ENCODE measurements at regions of chr6 and their contacts with region 1.

Region 1: GRCh38 chr6:127464881-127465459 is 5.8 kb upstream of the KIAA0408 start:
- DNase-seq: peak; percentile 65 to 68
- H3K4me3 ChIP-seq: no peak overlapping the region
- H3K4me3 Mint-ChIP-seq: no peak overlapping the region
- H3K27ac Mint-ChIP-seq: no peak overlapping the region
- H3K4me1 ChIP-seq: no peaks in the 10 kb centered on the region
- H3K4me1 Mint-ChIP-seq: no peaks in the 10 kb centered on the region
- H3K27me3 ChIP-seq: no peaks in the 10 kb centered on the region
- H3K27me3 Mint-ChIP-seq: no peaks in the 10 kb centered on the region
- CTCF ChIP-seq: peak; percentile 74 to 93

Region 2: GRCh38 chr6:127302728-127303660 is 162.0 kb before region 1 on chr6:
- CTCF ChIA-PET with region 1: no interaction called
- POLR2A ChIA-PET with region 1: no interaction called
- intact Hi-C with region 1: loop called (anchors 2 kb)
- DNase-seq: peak in 1 of 2 experiments; percentile 34
- H3K4me3 ChIP-seq: no peak overlapping the region
- H3K4me3 Mint-ChIP-seq: no peak overlapping the region
- H3K27ac Mint-ChIP-seq: no peak overlapping the region
- H3K4me1 ChIP-seq: no peaks in the 10 kb centered on the region
- H3K4me1 Mint-ChIP-seq: peaks cover 6% of the 10 kb centered on the region
- H3K27me3 ChIP-seq: no peaks in the 10 kb centered on the region
- H3K27me3 Mint-ChIP-seq: no peaks in the 10 kb centered on the region
- CTCF ChIP-seq: peak; percentile 56 to 76

Region 3: DNA sequence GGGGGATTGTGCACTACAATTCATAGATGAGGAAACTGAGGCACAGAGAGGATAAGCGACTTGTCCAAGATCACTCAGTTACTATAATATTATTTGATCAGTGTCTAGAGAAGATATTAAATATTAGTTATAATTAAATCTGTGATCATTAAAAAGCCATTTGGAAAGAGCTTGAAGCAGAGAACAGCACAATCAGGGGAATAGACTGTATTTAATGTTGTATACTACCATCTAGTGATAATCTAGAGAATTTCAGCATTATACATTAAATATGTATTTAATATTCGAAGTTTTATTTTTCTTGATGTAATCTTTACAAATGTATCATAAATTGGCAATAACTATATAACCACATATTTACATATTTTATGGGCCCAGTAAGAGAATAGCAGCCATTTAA is 74.3 kb after region 1 on chr6:
- CTCF ChIA-PET with region 1: interaction called, 3 read pairs
- POLR2A ChIA-PET with region 1: no interaction called
- intact Hi-C with region 1: loop called (anchors 1 kb)
- DNase-seq: no peak
- H3K4me3 ChIP-seq: no peak overlapping the region
- H3K4me3 Mint-ChIP-seq: no peak overlapping the region
- H3K27ac Mint-ChIP-seq: no peak overlapping the region
- H3K4me1 ChIP-seq: no peaks in the 10 kb centered on the region
- H3K4me1 Mint-ChIP-seq: no peaks in the 10 kb centered on the region
- H3K27me3 ChIP-seq: no peaks in the 10 kb centered on the region
- H3K27me3 Mint-ChIP-seq: peaks cover 2% of the 10 kb centered on the region
- CTCF ChIP-seq: no peak

Region 4: DNA sequence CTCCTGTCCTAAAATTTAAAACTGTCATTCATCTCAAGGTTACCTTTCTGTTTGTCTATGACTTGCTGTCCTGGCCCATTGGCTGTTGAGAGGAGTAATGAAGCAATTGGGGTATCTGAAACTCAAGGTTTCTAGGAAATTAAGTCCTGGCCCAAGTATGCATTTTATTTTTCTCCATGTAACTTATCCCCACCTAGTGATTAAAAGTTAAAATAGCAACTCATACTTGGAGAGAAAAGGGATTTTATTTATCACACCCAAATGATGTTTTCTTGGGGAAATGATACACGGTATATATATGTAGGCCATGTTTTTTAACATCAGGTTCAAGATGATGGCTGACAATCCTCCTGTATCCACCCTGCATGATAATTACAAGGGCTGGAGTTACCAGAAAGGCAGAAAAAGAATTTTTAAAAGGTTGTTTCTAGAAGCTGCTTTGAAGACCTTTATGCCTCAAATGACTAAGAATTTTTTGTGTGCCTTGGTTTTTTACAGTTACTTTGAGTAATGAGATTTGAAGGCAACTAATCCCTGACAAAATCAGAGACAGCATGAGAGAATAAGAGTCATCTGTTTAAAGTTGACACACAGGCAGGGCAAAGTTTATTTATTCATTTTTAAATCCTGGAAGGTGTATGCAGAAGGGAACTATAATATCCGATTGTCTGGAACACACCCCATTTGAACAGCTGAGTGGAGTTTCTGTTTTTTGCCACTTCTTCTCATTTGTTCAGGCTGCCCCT is 83.1 kb after region 1 on chr6:
- CTCF ChIA-PET with region 1: interaction called, 3 read pairs
- POLR2A ChIA-PET with region 1: no interaction called
- intact Hi-C with region 1: loop called (anchors 1 kb)
- DNase-seq: no peak
- H3K4me3 ChIP-seq: no peak overlapping the region
- H3K4me3 Mint-ChIP-seq: no peak overlapping the region
- H3K27ac Mint-ChIP-seq: no peak overlapping the region
- H3K4me1 ChIP-seq: no peaks in the 10 kb centered on the region
- H3K4me1 Mint-ChIP-seq: no peaks in the 10 kb centered on the region
- H3K27me3 ChIP-seq: no peaks in the 10 kb centered on the region
- H3K27me3 Mint-ChIP-seq: peaks cover 3% of the 10 kb centered on the region
- CTCF ChIP-seq: peak in 1 of 2 experiments; percentile 12

Region 5: DNA sequence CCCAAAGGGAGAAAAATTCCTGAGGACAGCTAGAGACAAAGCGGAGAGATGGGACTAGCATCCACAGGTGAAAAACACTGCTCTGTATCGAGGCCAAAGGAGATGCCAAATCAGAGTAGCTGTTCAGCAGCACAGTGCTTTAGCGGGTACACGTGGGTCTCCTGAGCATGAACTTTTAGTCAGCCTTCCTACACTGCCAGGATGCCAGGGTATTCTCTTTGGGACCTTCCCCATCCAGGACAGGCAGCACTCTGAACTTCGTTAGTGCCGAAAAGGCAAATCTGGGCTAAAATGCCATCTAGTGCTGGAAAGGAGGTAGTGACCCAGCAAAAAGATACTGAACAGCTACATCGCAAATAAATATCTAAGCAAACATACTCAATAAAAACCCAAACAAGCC is 176.9 kb after region 1 on chr6:
- CTCF ChIA-PET with region 1: no interaction called
- POLR2A ChIA-PET with region 1: no interaction called
- intact Hi-C with region 1: loop called (anchors 1 kb)
- DNase-seq: peak; percentile 30 to 36
- H3K4me3 ChIP-seq: no peak overlapping the region
- H3K4me3 Mint-ChIP-seq: no peak overlapping the region
- H3K27ac Mint-ChIP-seq: no peak overlapping the region
- H3K4me1 ChIP-seq: no peaks in the 10 kb centered on the region
- H3K4me1 Mint-ChIP-seq: no peaks in the 10 kb centered on the region
- H3K27me3 ChIP-seq: no peaks in the 10 kb centered on the region
- H3K27me3 Mint-ChIP-seq: no peaks in the 10 kb centered on the region
- CTCF ChIP-seq: peak; percentile 54 to 76

Region 6: DNA sequence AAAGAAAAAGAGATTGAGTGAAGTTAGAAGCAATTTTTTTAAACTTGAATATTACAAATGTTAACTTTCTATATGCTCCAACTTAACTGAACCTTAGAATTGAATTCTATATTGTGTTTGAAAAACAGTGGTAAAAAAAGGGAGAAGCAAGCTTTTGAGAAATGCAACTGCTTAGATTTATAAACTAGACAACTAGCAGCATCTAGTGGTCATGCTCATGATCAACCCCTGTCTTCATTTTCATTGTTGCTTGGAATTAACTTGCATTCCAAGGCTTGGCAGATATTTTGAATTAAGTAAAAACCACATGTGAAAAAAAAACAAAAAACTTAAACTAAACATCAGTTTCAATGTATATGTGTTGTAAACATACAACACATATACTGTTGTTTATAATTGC is 225.1 kb after region 1 on chr6:
- CTCF ChIA-PET with region 1: no interaction called
- POLR2A ChIA-PET with region 1: no interaction called
- intact Hi-C with region 1: loop called (anchors 1 kb)
- DNase-seq: no peak
- H3K4me3 ChIP-seq: no peak overlapping the region
- H3K4me3 Mint-ChIP-seq: no peak overlapping the region
- H3K27ac Mint-ChIP-seq: no peak overlapping the region
- H3K4me1 ChIP-seq: no peaks in the 10 kb centered on the region
- H3K4me1 Mint-ChIP-seq: no peaks in the 10 kb centered on the region
- H3K27me3 ChIP-seq: no peaks in the 10 kb centered on the region
- H3K27me3 Mint-ChIP-seq: no peaks in the 10 kb centered on the region
- CTCF ChIP-seq: peak; percentile 32 to 47